ENCODE measurements at regions of chr1 and their contacts with region 1.

Region 1: GRCh38 chr1:182771187-182771984 is 18.2 kb upstream of the NPL start:
- DNase-seq: no peak

Region 2: DNA sequence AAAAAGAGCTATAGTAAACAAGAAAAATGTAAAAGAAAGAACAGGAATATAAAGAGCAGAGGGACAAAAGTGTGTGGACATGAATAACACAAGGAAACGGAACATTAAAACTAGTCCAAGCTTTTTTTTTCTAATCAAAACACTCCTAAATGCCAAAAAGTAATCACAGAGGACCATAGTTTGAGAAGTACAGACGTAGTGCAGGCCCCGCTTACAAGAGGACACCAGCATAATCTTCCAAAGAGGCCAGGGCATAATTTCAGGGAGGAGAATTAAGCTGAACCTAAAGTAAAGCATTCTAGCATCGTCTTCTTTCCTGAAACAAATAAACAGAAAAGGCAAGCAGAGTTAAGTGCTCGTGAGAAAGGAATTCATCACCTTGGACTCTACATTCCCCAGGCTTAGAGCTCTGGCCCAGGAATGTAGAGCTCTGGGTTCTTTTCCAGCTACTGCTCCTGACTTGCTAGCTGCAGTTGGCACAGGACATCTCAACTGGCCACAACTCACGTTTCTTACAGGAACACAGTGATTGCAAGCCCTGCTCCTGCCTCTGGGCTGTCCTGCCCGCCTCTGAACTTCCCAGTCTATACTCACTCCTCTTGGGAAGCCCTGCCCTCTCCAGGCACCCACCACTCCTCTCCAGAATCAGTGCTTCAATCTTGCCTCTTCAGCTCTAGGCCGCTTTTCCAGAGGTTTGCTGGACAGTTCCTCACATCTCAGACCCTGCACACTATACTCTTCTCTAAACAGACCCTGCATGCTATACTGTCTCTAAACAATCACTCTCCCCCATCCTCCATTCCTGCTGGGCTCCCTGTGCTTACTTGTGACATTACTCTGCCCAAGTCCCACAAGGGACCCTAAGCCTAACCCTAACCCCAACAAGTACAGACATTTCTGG is 96.8 kb before region 1 on chr1:
- CTCF ChIA-PET with region 1: no interaction called
- POLR2A ChIA-PET with region 1: no interaction called
- DNase-seq: no peak

Region 3: DNA sequence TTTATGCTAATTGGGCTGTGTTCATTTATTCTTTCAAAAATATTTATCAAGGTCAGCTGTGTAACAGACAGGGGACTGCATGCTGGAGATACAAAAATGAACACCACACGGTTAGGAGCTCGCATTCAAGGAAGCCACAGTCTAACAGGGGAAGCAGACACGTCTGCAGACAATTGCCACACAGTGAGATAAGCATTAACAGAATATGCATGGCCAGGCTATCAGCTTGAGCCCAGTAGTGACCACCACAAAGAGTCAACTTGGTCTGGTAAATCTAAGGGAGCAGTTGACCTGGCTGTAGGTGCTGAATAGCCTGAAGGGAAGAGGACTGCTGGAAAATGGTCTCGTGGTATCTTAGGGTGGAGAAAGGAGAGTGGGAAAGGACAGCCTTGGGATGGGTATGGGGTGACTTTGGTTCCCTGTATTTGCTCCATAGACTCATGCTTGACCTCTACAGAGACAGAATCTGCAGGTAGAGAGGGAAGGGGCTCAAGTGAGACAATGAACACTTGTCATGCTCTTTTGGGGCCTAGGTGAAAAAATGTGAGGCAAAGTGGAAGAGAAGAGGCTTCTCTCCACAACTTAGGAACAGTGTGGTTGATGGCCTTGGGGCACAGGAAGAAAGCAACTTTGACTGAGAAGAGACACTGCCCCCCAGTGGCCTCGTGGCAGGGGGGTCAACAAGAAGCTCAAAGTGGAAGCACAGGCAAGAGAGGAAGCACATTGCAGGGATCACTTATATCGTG is 10.6 kb after region 1 on chr1:
- CTCF ChIA-PET with region 1: interaction called, 12 read pairs
- POLR2A ChIA-PET with region 1: no interaction called
- DNase-seq: peak; percentile 75

Region 4: GRCh38 chr1:182962554-182963115 is 191.2 kb after region 1 on chr1:
- CTCF ChIA-PET with region 1: no interaction called
- POLR2A ChIA-PET with region 1: no interaction called
- DNase-seq: peak; percentile 92